Common myeloid progenitor, CD34-positive (primary cell): ENCODE measurements at regions of chr21 and their contacts with region 1.

Region 1: DNA sequence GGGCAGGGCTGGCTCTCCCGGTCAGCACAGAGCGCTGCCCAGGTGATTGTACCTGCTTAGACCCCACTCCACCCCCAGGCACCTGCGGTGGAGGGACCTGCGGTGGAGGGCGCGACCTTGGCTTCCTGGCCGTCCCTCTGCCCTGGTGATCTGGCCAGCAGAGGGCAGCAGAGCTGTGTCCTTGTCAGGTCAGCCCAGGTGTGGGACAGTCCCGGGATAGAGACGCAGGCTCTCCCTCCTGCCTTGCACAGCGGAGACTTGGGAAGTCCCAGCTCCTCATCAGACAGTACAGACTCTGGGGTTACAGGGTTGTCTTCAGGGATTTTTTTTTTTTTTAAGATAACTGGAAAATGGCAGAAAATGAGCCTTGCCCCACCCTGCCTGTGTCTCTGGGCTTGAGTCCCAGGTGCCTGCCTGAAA is 10.0 kb downstream of the SLX9 start:
- DNase-seq: peak; percentile 59 to 67 (median 64)
- H3K4me3 ChIP-seq: no peak overlapping the region
- H3K27ac ChIP-seq: no peak overlapping the region
- H3K4me1 ChIP-seq: peaks cover 0 to 17% (median 6%) of the 10 kb centered on the region in 4 experiments
- H3K27me3 ChIP-seq: no peaks in the 10 kb centered on the region

Region 2: GRCh38 chr21:44666401-44667320 is 283.1 kb before region 1 on chr21 and contains the start of gene KRTAP12-2:
- CTCF ChIA-PET with region 1: no interaction called
- POLR2A ChIA-PET with region 1: no interaction called
- DNase-seq: no peak
- H3K4me3 ChIP-seq: no peak within 1 kb of the TSS
- H3K27ac ChIP-seq: no peak within 1 kb of the TSS
- H3K4me1 ChIP-seq: no peaks in the 10 kb centered on the region
- H3K27me3 ChIP-seq: peaks cover 0 to 13% (median 2%) of the 10 kb centered on the region in 5 experiments

Region 3: DNA sequence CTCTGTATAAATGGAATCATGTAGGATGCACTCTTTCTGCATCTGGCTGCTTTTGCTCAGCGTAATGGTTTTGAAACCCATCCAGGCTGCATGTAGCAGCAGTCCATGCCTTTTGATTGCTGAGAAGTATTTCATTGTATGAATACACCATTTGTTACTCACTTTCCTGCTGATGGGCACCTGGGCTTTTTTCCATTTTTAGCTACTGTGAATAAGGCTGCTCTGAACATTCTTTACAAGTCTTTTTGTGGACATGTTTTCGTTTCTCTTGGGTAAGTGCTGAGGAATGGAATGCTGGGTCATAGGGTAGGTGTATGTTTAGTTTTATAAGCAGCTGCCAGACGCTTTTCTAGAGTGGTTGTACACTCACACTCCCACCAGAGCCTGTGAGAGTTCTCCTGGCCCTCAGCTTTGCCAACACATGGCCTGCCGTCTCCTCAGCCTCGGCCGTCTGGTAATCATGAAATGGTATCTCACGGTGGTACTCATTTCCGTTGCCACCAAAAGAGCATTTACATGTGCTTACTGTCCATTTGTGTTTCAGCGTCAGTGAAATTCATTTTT is 12.7 kb after region 1 on chr21:
- CTCF ChIA-PET with region 1: interaction called, 74 read pairs
- POLR2A ChIA-PET with region 1: no interaction called
- DNase-seq: no peak
- H3K4me3 ChIP-seq: no peak overlapping the region
- H3K27ac ChIP-seq: no peak overlapping the region
- H3K4me1 ChIP-seq: peaks cover 0 to 27% (median 25%) of the 10 kb centered on the region in 4 experiments
- H3K27me3 ChIP-seq: no peaks in the 10 kb centered on the region

Region 4: DNA sequence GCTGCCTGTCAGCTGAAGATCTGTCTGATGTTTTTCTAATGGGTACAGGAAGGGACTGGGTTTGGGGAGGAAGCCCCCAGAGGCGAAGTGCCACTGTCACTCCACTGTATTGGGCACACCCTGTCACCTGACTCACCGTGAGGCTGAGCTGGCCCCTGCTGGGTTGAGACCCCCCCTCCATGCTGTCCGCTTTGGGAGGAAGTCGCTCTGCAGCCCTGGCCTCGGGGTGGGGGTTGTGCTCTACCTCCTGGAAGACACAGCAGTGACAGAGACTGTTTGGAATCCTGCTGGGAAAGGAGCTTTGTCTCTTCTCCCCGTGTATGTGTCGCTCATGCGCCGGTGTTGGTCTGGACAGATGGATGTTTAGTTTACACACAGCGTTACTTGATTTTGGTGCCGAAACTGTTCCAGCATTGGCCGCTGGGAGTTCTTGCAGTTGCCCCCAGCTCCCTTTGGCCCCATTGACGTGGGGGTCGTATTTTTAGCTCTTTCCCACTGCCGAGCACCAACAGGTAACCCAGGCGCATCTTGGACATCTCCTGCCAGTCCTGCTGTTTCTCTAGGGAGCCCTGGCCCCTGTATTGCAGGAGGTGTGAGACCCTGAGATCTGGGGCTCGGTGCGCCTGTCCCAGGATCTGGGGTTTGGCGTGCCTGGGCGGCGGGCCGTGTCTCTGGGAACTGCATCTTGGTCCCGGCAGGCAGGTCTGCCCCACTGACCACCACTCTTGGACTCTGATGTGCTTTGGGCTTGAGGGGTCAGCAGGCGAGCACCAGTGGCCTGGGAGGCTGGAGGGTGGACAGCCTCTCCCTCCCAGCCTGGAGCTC is 20.4 kb after region 1 on chr21:
- CTCF ChIA-PET with region 1: interaction called, 74 read pairs
- POLR2A ChIA-PET with region 1: no interaction called
- DNase-seq: peak; percentile 36 to 77 (median 67)
- H3K4me3 ChIP-seq: peak overlapping the region in 3 of 7 experiments; percentile 32 to 45 (median 39)
- H3K27ac ChIP-seq: no peak overlapping the region
- H3K4me1 ChIP-seq: peaks cover 0 to 67% (median 51%) of the 10 kb centered on the region in 4 experiments
- H3K27me3 ChIP-seq: no peaks in the 10 kb centered on the region

Region 5: GRCh38 chr21:45045481-45045880 is 95.7 kb after region 1 on chr21:
- CTCF ChIA-PET with region 1: no interaction called
- POLR2A ChIA-PET with region 1: no interaction called
- DNase-seq: no peak
- H3K4me3 ChIP-seq: no peak overlapping the region
- H3K27ac ChIP-seq: no peak overlapping the region
- H3K4me1 ChIP-seq: peaks cover 0 to 3% (median 0%) of the 10 kb centered on the region in 4 experiments
- H3K27me3 ChIP-seq: peaks cover 0 to 23% (median 7%) of the 10 kb centered on the region in 5 experiments

Region 6: GRCh38 chr21:45098867-45099266 is 149.1 kb after region 1 on chr21:
- CTCF ChIA-PET with region 1: interaction called, 15 read pairs
- POLR2A ChIA-PET with region 1: no interaction called
- DNase-seq: peak in 1 of 3 donors; percentile 45
- H3K4me3 ChIP-seq: no peak overlapping the region
- H3K27ac ChIP-seq: no peak overlapping the region
- H3K4me1 ChIP-seq: peaks cover 0 to 6% (median under 1%) of the 10 kb centered on the region in 4 experiments
- H3K27me3 ChIP-seq: peaks cover 0 to 13% (median 2%) of the 10 kb centered on the region in 5 experiments